Activated CD8-positive, alpha-beta T cell treated with anti-CD3 and anti-CD28 coated beads, Interleukin-2, amount 10 ng/mL, durations not matched to agents 7 days and 5 days (primary cell): ENCODE measurements at regions of chr3 and their contacts with region 1.

Region 1: GRCh38 chr3:32764481-32764880 is 53.3 kb upstream of the TRIM71 start:
- DNase-seq: no peak
- ATAC-seq: no peak
- H3K4me3 Mint-ChIP-seq: no peak overlapping the region
- H3K27ac Mint-ChIP-seq: no peak overlapping the region
- H3K4me1 Mint-ChIP-seq: peaks cover under 1% of the 10 kb centered on the region
- H3K27me3 Mint-ChIP-seq: no peaks in the 10 kb centered on the region

Region 2: GRCh38 chr3:32662647-32663046 is 101.8 kb before region 1 on chr3:
- CTCF ChIA-PET with region 1: no interaction called
- POLR2A ChIA-PET with region 1: no interaction called
- DNase-seq: no peak
- ATAC-seq: no peak
- H3K4me3 Mint-ChIP-seq: no peak overlapping the region
- H3K27ac Mint-ChIP-seq: no peak overlapping the region
- H3K4me1 Mint-ChIP-seq: no peaks in the 10 kb centered on the region
- H3K27me3 Mint-ChIP-seq: peaks cover 9% of the 10 kb centered on the region

Region 3: GRCh38 chr3:32781210-32781968 is 16.9 kb after region 1 on chr3:
- CTCF ChIA-PET with region 1: interaction called, 16 read pairs
- POLR2A ChIA-PET with region 1: no interaction called
- DNase-seq: peak; percentile 79
- ATAC-seq: peak; percentile 92
- H3K4me3 Mint-ChIP-seq: peak overlapping the region; percentile 83
- H3K27ac Mint-ChIP-seq: peak overlapping the region; percentile 64
- H3K4me1 Mint-ChIP-seq: peaks cover 8% of the 10 kb centered on the region
- H3K27me3 Mint-ChIP-seq: peaks cover 4% of the 10 kb centered on the region